ENCODE measurements at regions of chr3 and their contacts with region 1.

Region 1: GRCh38 chr3:142129516-142130171 is 19.7 kb downstream of the TFDP2 start:
- DNase-seq: no peak
- H3K4me3 ChIP-seq: no peak overlapping the region
- H3K4me3 Mint-ChIP-seq: no peak overlapping the region
- H3K27ac Mint-ChIP-seq: no peak overlapping the region
- H3K4me1 ChIP-seq: no peaks in the 10 kb centered on the region
- H3K4me1 Mint-ChIP-seq: no peaks in the 10 kb centered on the region
- H3K27me3 ChIP-seq: no peaks in the 10 kb centered on the region
- H3K27me3 Mint-ChIP-seq: no peaks in the 10 kb centered on the region
- CTCF ChIP-seq: no peak

Region 2: DNA sequence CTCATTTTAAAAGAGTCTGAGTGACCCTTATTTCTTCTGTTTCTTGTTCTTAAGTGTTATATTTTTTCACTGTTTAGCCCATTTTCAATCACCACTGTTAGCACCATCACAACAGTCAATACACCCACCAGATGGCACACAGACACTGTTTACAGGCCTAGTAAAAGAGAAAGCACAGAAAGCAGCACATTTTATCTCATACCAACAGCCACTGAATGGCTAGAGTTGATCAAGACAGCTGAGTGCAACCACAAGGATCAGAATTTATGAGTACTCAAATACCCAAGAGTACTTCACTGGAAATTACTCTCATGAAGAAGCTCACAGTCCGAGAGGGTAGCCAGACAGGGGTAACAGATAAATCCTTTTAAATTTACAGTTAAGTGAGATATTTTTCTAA is 107.3 kb before region 1 on chr3:
- CTCF ChIA-PET with region 1: interaction called, 7 read pairs
- POLR2A ChIA-PET with region 1: no interaction called
- intact Hi-C with region 1: loop called (anchors 5 kb)
- DNase-seq: peak in 1 of 2 experiments; percentile 11
- H3K4me3 ChIP-seq: no peak overlapping the region
- H3K4me3 Mint-ChIP-seq: no peak overlapping the region
- H3K27ac Mint-ChIP-seq: no peak overlapping the region
- H3K4me1 ChIP-seq: peaks cover 3% of the 10 kb centered on the region; the same call in 1 of the 2 replicates
- H3K4me1 Mint-ChIP-seq: peaks cover 8% of the 10 kb centered on the region
- H3K27me3 ChIP-seq: no peaks in the 10 kb centered on the region
- H3K27me3 Mint-ChIP-seq: no peaks in the 10 kb centered on the region
- CTCF ChIP-seq: no peak

Region 3: DNA sequence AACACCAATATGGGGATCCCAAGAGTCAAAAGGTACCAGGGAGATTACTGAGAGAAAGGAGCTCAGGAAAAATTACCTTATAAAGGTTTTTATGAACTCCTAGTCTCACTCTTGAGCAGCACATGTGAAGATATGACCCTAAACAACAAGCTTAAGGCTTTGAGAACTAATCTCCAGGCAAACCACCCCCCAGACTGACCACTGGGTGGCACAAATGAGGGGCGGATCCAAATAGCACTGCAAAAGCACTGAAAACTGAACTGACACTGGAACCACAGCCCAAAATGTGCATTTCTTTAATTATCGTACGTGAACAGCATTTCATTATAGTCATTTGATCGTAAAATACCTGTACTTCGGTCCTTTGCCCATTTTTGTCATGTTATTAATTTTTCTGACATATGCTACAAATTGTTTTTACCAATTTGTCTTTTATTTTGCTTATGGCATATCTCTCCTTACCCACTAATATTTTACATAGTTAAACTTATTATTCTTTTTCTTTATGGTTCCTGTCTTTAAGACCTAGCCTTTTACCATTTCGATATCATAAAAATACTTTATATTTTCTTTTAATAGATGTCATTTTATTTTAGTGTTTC is 51.2 kb after region 1 on chr3:
- CTCF ChIA-PET with region 1: interaction called, 9 read pairs
- POLR2A ChIA-PET with region 1: no interaction called
- intact Hi-C with region 1: loop called (anchors 1 kb)
- DNase-seq: peak; percentile 44 to 61
- H3K4me3 ChIP-seq: no peak overlapping the region
- H3K4me3 Mint-ChIP-seq: peak overlapping the region; percentile 8
- H3K27ac Mint-ChIP-seq: peak overlapping the region; percentile 72
- H3K4me1 ChIP-seq: peaks cover 9% of the 10 kb centered on the region; the same call in 1 of the 2 replicates
- H3K4me1 Mint-ChIP-seq: peaks cover 7% of the 10 kb centered on the region
- H3K27me3 ChIP-seq: no peaks in the 10 kb centered on the region
- H3K27me3 Mint-ChIP-seq: no peaks in the 10 kb centered on the region
- CTCF ChIP-seq: peak; percentile 71 to 72

Region 4: GRCh38 chr3:142211035-142211434 is 81.4 kb after region 1 on chr3:
- CTCF ChIA-PET with region 1: no interaction called
- POLR2A ChIA-PET with region 1: no interaction called
- intact Hi-C with region 1: loop called (anchors 1 kb)
- DNase-seq: peak in 1 of 2 experiments; percentile 38
- H3K4me3 ChIP-seq: no peak overlapping the region
- H3K4me3 Mint-ChIP-seq: no peak overlapping the region
- H3K27ac Mint-ChIP-seq: no peak overlapping the region
- H3K4me1 ChIP-seq: no peaks in the 10 kb centered on the region
- H3K4me1 Mint-ChIP-seq: no peaks in the 10 kb centered on the region
- H3K27me3 ChIP-seq: no peaks in the 10 kb centered on the region
- H3K27me3 Mint-ChIP-seq: no peaks in the 10 kb centered on the region
- CTCF ChIP-seq: peak in 1 of 2 experiments; percentile 61

Region 5: DNA sequence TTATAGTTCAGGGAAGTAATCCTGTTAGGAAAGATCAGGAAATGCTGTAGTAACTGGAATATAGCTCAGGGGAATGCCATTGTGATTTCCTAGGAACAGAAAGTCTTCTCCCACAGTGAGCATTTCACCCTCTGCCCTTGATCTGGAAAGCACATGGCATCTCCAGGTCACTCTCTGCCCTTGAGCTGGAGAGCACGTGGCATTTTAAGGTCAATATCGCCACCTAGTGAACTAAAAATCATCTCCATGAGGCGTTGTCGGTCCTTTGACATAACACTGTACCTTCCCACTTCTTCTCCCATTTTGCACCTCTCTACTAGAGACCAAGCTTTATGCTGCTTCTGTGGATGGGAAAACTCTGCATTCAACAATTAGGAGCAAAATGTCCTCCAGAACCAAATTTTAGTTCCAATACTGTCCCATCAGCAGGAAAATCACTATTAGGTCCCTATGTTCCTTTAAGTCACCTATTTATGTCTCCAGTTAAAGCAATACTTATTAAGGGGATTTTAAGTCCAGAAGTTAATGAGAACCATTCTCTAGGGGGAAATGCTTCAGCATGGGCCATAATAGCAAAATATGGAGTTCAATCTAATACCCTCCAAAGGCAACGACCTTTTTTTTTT is 150.4 kb after region 1 on chr3:
- CTCF ChIA-PET with region 1: interaction called, 8 read pairs
- POLR2A ChIA-PET with region 1: no interaction called
- intact Hi-C with region 1: loop called (anchors 1 kb)
- DNase-seq: peak; percentile 55 to 64
- H3K4me3 ChIP-seq: no peak overlapping the region
- H3K4me3 Mint-ChIP-seq: no peak overlapping the region
- H3K27ac Mint-ChIP-seq: no peak overlapping the region
- H3K4me1 ChIP-seq: no peaks in the 10 kb centered on the region
- H3K4me1 Mint-ChIP-seq: no peaks in the 10 kb centered on the region
- H3K27me3 ChIP-seq: no peaks in the 10 kb centered on the region
- H3K27me3 Mint-ChIP-seq: no peaks in the 10 kb centered on the region
- CTCF ChIP-seq: peak; percentile 48 to 56

Region 6: GRCh38 chr3:142310439-142310838 is 180.8 kb after region 1 on chr3:
- CTCF ChIA-PET with region 1: no interaction called
- POLR2A ChIA-PET with region 1: no interaction called
- intact Hi-C with region 1: no loop called
- DNase-seq: no peak
- H3K4me3 ChIP-seq: no peak overlapping the region
- H3K4me3 Mint-ChIP-seq: no peak overlapping the region
- H3K27ac Mint-ChIP-seq: no peak overlapping the region
- H3K4me1 ChIP-seq: 0 out of 2 replicates have a peak, but pooled peaks cover under 1% of the 10 kb centered on the region
- H3K4me1 Mint-ChIP-seq: no peaks in the 10 kb centered on the region
- H3K27me3 ChIP-seq: no peaks in the 10 kb centered on the region
- H3K27me3 Mint-ChIP-seq: no peaks in the 10 kb centered on the region
- CTCF ChIP-seq: no peak